ENCODE measurements at regions of chr2 and their contacts with region 1.

Region 1: GRCh38 chr2:190564838-190565237 is 30.3 kb upstream of the NEMP2 start:
- DNase-seq: no peak
- H3K4me3 ChIP-seq: no peak overlapping the region
- H3K27ac ChIP-seq: no peak overlapping the region
- H3K4me1 ChIP-seq: peaks cover 0 to 7% (median 3%) of the 10 kb centered on the region in 4 donors
- H3K27me3 ChIP-seq: no peaks in the 10 kb centered on the region
- CTCF ChIP-seq: no peak
- EP300 ChIP-seq: no peak
- POLR2A ChIP-seq: no peak

Region 2: DNA sequence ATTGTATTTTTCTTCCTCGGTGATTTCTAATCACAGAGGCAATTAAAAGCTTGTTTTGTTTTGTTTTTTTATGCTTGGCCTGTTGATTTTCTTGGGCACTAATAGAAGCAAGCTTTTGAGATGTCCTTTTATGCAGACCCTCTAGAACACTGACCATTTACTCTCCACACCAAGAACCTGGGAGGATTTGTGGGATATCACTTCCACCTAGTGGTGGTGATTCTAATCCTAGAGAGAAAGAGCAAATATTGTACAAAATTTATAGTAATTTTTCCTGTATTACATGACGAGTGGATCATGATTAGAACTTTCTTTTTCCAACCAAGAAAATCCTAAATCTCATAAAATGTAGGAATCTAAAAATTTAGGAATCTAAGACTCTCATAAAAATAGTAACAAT is 53.7 kb before region 1 on chr2:
- in situ Hi-C with region 1: no loop called
- intact Hi-C with region 1: no loop called
- DNase-seq: no peak
- H3K4me3 ChIP-seq: no peak overlapping the region
- H3K27ac ChIP-seq: peak overlapping the region in 1 of 4 donors; percentile 74
- H3K4me1 ChIP-seq: peaks cover 0 to 28% (median 22%) of the 10 kb centered on the region in 4 donors
- H3K27me3 ChIP-seq: no peaks in the 10 kb centered on the region
- CTCF ChIP-seq: peak; percentile 24 to 65 (median 48)
- EP300 ChIP-seq: no peak
- POLR2A ChIP-seq: no peak

Region 3: DNA sequence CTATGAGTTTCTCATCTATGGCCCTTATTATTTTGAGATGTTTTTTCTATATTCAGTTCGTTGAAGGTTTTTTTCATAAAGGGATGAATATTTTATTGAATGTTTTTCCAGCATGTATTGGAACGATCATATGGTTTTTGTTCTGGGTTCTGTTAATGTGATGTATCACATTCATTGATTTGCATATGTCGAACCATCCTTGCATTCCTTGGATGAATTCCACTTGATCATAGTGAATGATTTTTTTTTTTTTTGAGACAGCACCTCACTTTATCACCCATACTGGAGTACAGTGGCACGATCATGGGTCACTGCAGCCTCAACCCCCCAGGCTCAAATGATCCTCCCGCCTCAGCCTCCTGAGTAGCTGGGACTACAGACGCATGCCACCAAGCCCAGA is 24.8 kb before region 1 on chr2:
- in situ Hi-C with region 1: no loop called
- intact Hi-C with region 1: loop called (anchors 1 kb)
- DNase-seq: no peak
- H3K4me3 ChIP-seq: no peak overlapping the region
- H3K27ac ChIP-seq: no peak overlapping the region
- H3K4me1 ChIP-seq: peaks cover 0 to 10% (median 8%) of the 10 kb centered on the region in 4 donors
- H3K27me3 ChIP-seq: no peaks in the 10 kb centered on the region
- CTCF ChIP-seq: no peak
- EP300 ChIP-seq: no peak
- POLR2A ChIP-seq: no peak